ENCODE measurements at regions of chr18 and their contacts with region 1.

Region 1: DNA sequence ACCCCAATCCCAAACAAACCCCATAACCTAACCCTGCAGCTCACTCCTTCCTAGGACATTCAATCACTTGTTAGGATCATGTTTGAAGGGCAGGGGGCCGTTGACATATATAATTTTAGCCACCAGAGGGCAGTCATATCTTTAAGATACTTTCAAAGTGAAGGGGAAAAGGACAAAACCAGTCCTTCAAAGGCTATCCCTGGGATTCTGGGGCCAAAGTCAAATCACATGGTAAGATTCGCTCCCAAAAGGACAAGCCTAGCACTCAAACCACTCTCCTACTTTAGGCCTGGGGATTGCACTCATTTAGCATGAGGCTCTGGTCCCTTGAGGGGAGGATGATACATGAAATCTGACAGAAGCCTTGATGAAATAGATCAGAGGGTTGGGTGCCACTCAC is 44.6 kb downstream of the HAUS1 start:
- DNase-seq: peak; percentile 42
- H3K4me3 ChIP-seq: no peak overlapping the region
- H3K27ac ChIP-seq: no peak overlapping the region
- H3K4me1 ChIP-seq: peaks cover 23% of the 10 kb centered on the region
- H3K27me3 ChIP-seq: no peaks in the 10 kb centered on the region
- CTCF ChIP-seq: peak; percentile 63 to 73

Region 2: GRCh38 chr18:45602926-45603325 is 545.9 kb before region 1 on chr18:
- CTCF ChIA-PET with region 1: no interaction called
- dilution Hi-C with region 1: no loop called
- in situ Hi-C with region 1: no loop called
- intact Hi-C with region 1: no loop called
- DNase-seq: peak; percentile 54
- H3K4me3 ChIP-seq: no peak overlapping the region
- H3K27ac ChIP-seq: no peak overlapping the region
- H3K4me1 ChIP-seq: no peaks in the 10 kb centered on the region
- H3K27me3 ChIP-seq: no peaks in the 10 kb centered on the region
- CTCF ChIP-seq: no peak

Region 3: DNA sequence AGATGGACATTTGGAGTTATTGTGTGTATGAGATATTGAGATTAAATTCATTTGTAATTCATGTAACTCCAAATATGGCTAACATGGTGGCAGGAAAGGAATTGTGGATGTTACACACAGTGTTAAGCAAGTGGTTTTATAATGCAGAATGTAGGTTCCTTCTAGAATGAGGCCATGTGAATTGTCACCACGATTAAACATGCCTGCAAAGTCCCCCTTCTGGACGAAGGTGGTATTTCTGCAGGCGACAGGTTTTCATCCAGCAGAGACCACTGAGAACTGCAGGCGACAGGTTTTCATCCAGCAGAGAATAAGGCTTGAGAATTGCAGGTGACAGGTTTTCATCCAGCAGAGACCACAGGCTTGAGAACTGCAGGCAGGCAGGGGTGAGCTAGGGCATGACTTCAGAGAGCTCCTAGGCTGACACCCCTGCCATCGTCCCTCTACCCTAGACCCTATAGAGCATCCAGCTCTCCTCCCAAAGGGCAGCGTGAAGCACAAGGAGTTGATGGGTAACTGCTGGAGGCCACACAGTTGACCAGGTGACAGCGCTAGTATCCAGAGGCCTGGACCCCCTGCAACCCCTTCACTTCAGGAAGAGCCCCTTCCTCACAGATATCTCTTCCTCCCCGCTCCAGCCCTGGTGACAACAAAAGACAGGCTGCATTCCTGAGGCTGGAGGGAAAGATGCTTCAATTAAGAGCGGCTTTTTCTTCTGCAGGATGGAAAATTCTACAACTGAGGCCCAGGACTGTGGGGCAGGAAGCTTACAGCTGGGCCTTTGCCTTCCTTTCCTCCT is 332.4 kb after region 1 on chr18:
- CTCF ChIA-PET with region 1: no interaction called
- dilution Hi-C with region 1: no loop called
- in situ Hi-C with region 1: no loop called
- intact Hi-C with region 1: loop called (anchors 1 kb)
- DNase-seq: no peak
- H3K4me3 ChIP-seq: no peak overlapping the region
- H3K27ac ChIP-seq: no peak overlapping the region
- H3K4me1 ChIP-seq: no peaks in the 10 kb centered on the region
- H3K27me3 ChIP-seq: no peaks in the 10 kb centered on the region
- CTCF ChIP-seq: peak; percentile 65

Region 4: GRCh38 chr18:46622999-46623398 is 474.2 kb after region 1 on chr18:
- CTCF ChIA-PET with region 1: no interaction called
- dilution Hi-C with region 1: no loop called
- in situ Hi-C with region 1: no loop called
- intact Hi-C with region 1: loop called (anchors 1 kb)
- DNase-seq: peak; percentile 16
- H3K4me3 ChIP-seq: no peak overlapping the region
- H3K27ac ChIP-seq: no peak overlapping the region
- H3K4me1 ChIP-seq: peaks cover 14% of the 10 kb centered on the region
- H3K27me3 ChIP-seq: no peaks in the 10 kb centered on the region
- CTCF ChIP-seq: peak in 1 of 2 donors; percentile 21